ENCODE measurements at regions of chr9 and their contacts with region 1.

Region 1: GRCh38 chr9:2132484-2133082 is 117.4 kb downstream of the SMARCA2 start:
- DNase-seq: peak; percentile 6
- ATAC-seq: peak; percentile 57; the same call in 1 of the 2 replicates
- H3K4me3 ChIP-seq: no peak overlapping the region
- H3K27ac ChIP-seq: no peak overlapping the region
- H3K4me1 ChIP-seq: no peaks in the 10 kb centered on the region
- H3K27me3 ChIP-seq: no peaks in the 10 kb centered on the region
- CTCF ChIP-seq: peak; percentile 34 to 73 (median 60); a peak in 5 of 6 replicates
- POLR2A ChIP-seq: no peak
- RAD21 ChIP-seq: peak; percentile 68

Region 2: DNA sequence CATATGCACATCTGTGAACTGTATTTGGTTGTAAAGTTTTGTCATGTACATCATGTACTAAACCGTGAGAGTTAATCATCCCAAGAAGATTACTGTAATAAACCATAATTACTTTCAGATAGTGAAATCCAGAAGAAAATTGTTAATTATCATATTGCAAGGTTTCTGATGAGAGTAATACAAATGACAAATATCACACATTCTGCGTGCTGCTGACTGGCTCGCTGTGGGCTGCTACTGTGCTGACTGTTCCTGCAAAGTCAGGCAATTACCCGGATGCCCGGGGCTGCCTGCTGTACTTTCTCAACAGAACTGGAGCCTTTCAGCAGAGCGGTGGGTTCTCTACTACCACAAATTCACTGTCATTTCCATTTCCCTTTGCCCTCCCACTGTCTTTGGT is 49.1 kb before region 1 on chr9:
- CTCF ChIA-PET with region 1: no interaction called
- POLR2A ChIA-PET with region 1: no interaction called
- RAD21 ChIA-PET with region 1: no interaction called
- intact Hi-C with region 1: no loop called
- DNase-seq: no peak
- ATAC-seq: no peak
- H3K4me3 ChIP-seq: no peak overlapping the region
- H3K27ac ChIP-seq: no peak overlapping the region
- H3K4me1 ChIP-seq: no peaks in the 10 kb centered on the region
- H3K27me3 ChIP-seq: no peaks in the 10 kb centered on the region
- CTCF ChIP-seq: no peak
- POLR2A ChIP-seq: no peak
- RAD21 ChIP-seq: no peak

Region 3: GRCh38 chr9:2181792-2182191 is 49.2 kb after region 1 on chr9:
- CTCF ChIA-PET with region 1: interaction called, 5 read pairs
- POLR2A ChIA-PET with region 1: no interaction called
- RAD21 ChIA-PET with region 1: no interaction called
- intact Hi-C with region 1: loop called (anchors 5 kb)
- DNase-seq: peak; percentile 12
- ATAC-seq: peak; percentile 81
- H3K4me3 ChIP-seq: no peak overlapping the region
- H3K27ac ChIP-seq: no peak overlapping the region
- H3K4me1 ChIP-seq: no peaks in the 10 kb centered on the region
- H3K27me3 ChIP-seq: no peaks in the 10 kb centered on the region
- CTCF ChIP-seq: peak; percentile 20 to 69 (median 68); a peak in 5 of 6 replicates
- POLR2A ChIP-seq: no peak
- RAD21 ChIP-seq: peak; percentile 30; the same call in 1 of the 2 replicates

Region 4: DNA sequence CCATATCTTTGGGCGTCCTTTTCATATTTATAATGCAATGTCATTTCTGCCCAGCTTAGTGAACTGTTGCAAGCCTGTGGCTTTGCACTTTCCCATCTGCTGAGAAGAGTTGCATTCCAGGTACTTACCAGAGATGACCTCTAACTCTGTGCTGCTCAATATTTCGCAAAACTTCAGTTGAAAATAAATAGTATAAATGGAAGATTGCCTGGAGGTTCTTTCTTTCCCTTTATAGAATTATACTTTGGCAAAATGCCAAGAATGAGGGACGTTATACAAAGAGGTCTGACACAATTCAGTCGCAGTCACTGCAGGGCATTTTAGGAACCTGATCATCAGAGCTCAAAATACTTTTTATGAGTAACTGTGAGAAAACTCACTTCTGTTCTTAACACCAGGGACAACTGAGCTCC is 470.1 kb after region 1 on chr9:
- CTCF ChIA-PET with region 1: no interaction called
- POLR2A ChIA-PET with region 1: no interaction called
- RAD21 ChIA-PET with region 1: no interaction called
- intact Hi-C with region 1: loop called (anchors 10 kb)
- DNase-seq: no peak
- ATAC-seq: no peak
- H3K4me3 ChIP-seq: no peak overlapping the region
- H3K27ac ChIP-seq: no peak overlapping the region
- H3K4me1 ChIP-seq: no peaks in the 10 kb centered on the region
- H3K27me3 ChIP-seq: peaks cover 28% of the 10 kb centered on the region
- CTCF ChIP-seq: no peak
- POLR2A ChIP-seq: no peak
- RAD21 ChIP-seq: no peak

Region 5: GRCh38 chr9:2722715-2723114 is 590.1 kb after region 1 on chr9:
- CTCF ChIA-PET with region 1: interaction called, 7 read pairs
- POLR2A ChIA-PET with region 1: no interaction called
- RAD21 ChIA-PET with region 1: no interaction called
- intact Hi-C with region 1: loop called (anchors 5 kb)
- DNase-seq: no peak
- ATAC-seq: no peak
- H3K4me3 ChIP-seq: no peak overlapping the region
- H3K27ac ChIP-seq: no peak overlapping the region
- H3K4me1 ChIP-seq: peaks cover 0 to 21% of the 10 kb centered on the region in 2 experiments; a peak in 1 of 4 replicates
- H3K27me3 ChIP-seq: no peaks in the 10 kb centered on the region
- CTCF ChIP-seq: no peak
- POLR2A ChIP-seq: no peak
- RAD21 ChIP-seq: no peak

Region 6: DNA sequence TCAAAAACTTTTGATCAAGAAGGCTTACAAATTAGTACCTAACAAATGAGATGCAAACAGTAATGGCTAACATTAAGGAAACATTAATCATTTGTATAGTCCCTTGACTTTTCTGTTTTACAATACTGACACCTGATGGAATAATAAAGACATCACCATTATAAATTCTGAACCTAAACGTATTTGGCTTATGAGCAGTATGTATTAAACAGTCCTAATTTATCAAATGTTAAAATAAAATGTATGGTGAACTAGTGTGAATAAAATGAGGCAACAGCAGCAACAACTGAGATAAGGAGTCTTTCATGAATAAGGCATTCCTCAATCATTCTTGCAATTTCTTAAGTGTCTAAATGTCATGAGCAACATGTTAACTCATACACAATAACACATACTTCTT is 705.3 kb after region 1 on chr9:
- CTCF ChIA-PET with region 1: no interaction called
- POLR2A ChIA-PET with region 1: no interaction called
- RAD21 ChIA-PET with region 1: no interaction called
- intact Hi-C with region 1: loop called (anchors 5 kb)
- DNase-seq: no peak
- ATAC-seq: no peak
- H3K4me3 ChIP-seq: no peak overlapping the region
- H3K27ac ChIP-seq: no peak overlapping the region
- H3K4me1 ChIP-seq: peaks cover 6 to 11% of the 10 kb centered on the region in 2 experiments; a peak in 3 of 4 replicates
- H3K27me3 ChIP-seq: no peaks in the 10 kb centered on the region
- CTCF ChIP-seq: peak in 2 of 3 experiments; percentile 8 to 40; a peak in 2 of 6 replicates
- POLR2A ChIP-seq: no peak
- RAD21 ChIP-seq: peak; percentile 34; the same call in 1 of the 2 replicates

Region 7: GRCh38 chr9:3441197-3441816 is 1308.7 kb after region 1 on chr9:
- CTCF ChIA-PET with region 1: interaction called, 3 read pairs
- POLR2A ChIA-PET with region 1: no interaction called
- RAD21 ChIA-PET with region 1: no interaction called
- intact Hi-C with region 1: loop called (anchors 2 kb)
- DNase-seq: peak; percentile 51
- ATAC-seq: peak; percentile 87
- H3K4me3 ChIP-seq: no peak overlapping the region
- H3K27ac ChIP-seq: no peak overlapping the region
- H3K4me1 ChIP-seq: no peaks in the 10 kb centered on the region
- H3K27me3 ChIP-seq: no peaks in the 10 kb centered on the region
- CTCF ChIP-seq: peak; percentile 44 to 65 (median 55); a peak in 5 of 6 replicates
- POLR2A ChIP-seq: no peak
- RAD21 ChIP-seq: peak; percentile 46; the same call in 1 of the 2 replicates

Region 8: GRCh38 chr9:3809724-3810123 is 1677.1 kb after region 1 on chr9:
- CTCF ChIA-PET with region 1: no interaction called
- POLR2A ChIA-PET with region 1: no interaction called
- RAD21 ChIA-PET with region 1: no interaction called
- intact Hi-C with region 1: loop called (anchors 10 kb)
- DNase-seq: peak; percentile 22
- ATAC-seq: no peak
- H3K4me3 ChIP-seq: no peak overlapping the region
- H3K27ac ChIP-seq: no peak overlapping the region
- H3K4me1 ChIP-seq: peaks cover 0 to 8% of the 10 kb centered on the region in 2 experiments; a peak in 2 of 4 replicates
- H3K27me3 ChIP-seq: no peaks in the 10 kb centered on the region
- CTCF ChIP-seq: no peak
- POLR2A ChIP-seq: no peak
- RAD21 ChIP-seq: no peak